HEK293 (cell line): ENCODE measurements at regions of chr2 and their contacts with region 1.

Region 1: DNA sequence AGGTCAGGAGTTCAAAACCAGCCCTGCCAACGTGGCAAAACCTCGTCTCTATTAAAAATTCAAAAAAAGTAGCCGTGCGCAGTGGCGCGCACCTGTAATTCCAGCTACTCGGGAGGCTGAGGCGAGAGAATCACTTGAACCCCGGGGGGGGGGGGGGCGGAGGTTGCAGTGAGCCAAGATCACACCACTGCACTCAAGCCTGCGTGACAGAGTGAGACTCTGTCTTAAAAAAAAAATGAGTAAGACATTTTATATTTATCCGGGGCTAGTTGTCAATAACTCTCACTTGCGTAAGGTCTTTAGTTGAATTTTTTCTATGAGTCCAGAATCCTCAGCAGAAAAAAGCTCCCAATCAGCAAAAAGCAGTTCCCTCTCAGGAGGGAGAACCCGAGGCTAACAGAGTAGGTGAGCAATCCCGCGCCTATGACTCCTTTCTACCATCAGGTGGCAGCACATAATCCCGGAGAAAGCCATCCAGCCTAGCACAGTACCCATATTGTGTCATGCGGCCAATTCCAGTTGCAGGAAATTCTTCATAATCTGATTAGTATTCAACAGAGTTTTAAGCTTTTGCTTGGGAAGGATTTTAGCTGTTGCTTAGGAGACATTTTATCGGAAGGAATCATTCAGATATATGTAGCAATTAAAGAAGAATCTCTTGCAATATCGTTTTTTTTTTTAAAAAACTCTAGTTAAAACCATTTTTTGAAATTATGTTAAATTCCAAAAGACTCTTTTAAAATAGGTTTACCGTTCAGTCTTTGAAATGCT is 11.9 kb upstream of the CRYGA start:
- H3K4me3 ChIP-seq: no peak overlapping the region
- H3K27ac ChIP-seq: no peak overlapping the region
- H3K4me1 ChIP-seq: no peaks in the 10 kb centered on the region
- CTCF ChIP-seq: peak; percentile 63; the same call in 1 of the 2 replicates

Region 2: DNA sequence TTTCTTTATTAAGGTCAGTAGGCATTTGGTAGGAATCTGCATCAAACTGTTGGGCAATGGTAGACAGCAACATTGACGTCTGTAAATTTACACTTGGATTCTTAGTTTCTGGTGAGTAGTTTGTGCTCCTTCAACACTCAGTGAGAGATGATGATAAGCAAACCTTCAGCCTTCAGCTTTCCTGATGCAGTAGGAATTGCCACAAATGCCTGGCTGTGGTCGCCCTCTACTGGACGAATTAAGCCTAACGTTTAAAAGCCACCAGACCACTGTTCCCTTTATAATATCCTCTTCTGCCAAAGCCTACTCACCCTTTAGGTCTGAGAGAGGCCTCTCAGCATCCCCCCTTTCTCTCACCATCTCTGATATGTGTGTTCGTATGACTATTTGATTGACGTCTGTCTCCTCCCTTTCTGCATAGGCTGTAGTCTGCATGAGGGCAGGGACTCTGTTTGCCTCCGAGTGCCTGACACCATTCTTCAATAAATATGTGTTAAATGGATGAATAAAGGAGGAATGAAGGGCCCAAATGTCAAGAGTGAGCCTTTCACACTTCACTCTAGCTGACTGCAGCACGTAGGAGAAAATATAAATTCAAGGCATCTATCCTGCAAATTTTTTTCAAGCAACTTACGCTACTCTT is 102.9 kb before region 1 on chr2:
- CTCF ChIA-PET with region 1: no interaction called
- POLR2A ChIA-PET with region 1: no interaction called
- H3K4me3 ChIP-seq: no peak overlapping the region
- H3K27ac ChIP-seq: no peak overlapping the region
- H3K4me1 ChIP-seq: no peaks in the 10 kb centered on the region
- CTCF ChIP-seq: peak; percentile 76

Region 3: GRCh38 chr2:208086029-208086428 is 89.2 kb before region 1 on chr2:
- CTCF ChIA-PET with region 1: no interaction called
- POLR2A ChIA-PET with region 1: no interaction called
- H3K4me3 ChIP-seq: no peak overlapping the region
- H3K27ac ChIP-seq: no peak overlapping the region
- H3K4me1 ChIP-seq: no peaks in the 10 kb centered on the region
- CTCF ChIP-seq: no peak

Region 4: DNA sequence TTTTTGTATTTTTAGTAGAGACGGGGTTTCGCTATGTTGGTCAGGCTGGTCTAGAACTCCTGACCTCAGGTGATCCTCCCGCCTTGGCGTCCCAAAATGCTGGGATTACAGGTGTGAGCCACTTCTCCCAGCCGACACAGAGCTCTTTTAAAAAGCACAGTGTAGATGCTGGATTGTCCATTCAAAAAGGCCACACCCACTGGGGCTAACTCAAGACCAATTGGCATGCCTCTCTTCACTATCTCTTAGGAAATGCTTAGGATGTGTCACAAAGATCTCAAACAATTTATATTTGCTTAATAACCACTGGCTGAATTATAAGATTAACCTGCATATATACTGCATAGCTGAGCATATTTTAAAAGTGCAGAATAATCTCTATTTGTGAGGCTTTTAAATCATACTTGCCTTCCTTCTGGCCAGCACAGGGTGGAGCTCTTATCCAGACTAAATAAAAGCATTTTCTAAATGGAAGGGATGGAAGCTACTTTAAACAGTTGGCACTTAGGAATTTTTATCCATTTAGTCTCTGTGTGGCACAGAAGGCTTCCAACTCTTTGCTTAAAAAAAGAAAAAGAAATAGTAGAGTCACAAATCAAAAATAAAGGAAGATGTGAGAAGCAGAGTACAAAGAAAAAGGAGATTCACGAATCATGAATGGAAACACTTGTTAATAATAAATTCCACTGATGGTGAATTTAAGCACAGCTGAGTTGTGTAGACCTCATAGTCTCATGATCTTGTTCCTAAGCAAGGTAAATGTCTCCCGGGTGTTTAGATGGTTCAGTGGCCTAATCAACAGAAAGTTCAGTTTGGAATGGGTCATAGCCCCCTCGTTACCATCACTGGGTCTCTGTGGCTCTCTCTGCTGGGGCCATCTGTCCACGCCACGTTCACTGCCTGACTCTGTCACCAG is 73.3 kb before region 1 on chr2:
- CTCF ChIA-PET with region 1: interaction called, 22 read pairs
- POLR2A ChIA-PET with region 1: no interaction called
- H3K4me3 ChIP-seq: no peak overlapping the region
- H3K27ac ChIP-seq: no peak overlapping the region
- H3K4me1 ChIP-seq: no peaks in the 10 kb centered on the region
- CTCF ChIP-seq: no peak

Region 5: DNA sequence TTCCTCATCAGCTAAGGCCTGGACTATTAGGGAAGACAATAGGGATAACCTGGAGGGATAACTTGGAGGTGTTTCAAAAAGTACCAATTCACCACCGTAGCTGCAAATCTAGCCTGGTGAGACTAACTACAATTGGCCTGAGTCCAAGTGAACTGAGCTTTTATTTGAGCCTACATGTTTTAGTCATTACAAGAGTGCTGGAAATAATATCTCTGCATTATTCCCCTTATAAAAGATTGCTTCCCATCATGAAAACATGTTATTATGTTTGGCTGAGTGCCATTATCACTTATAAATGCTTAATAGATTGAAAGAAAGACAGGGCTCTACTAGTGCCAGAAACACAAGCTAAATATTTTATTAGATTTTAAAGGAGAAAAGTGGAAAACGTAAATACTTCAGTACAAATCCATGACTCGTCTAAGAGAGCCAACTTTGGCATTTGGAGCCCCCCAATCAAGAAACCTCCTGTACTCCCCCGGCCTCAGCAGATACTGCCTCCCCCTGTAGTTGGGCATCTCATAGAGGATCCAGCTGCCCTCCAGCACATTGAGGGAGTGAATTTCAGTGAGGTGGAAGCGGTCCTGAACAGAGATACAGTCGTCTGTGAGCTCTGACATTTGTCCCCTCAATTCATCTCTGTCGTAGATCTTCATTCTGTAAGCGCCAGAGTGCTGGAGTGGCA is 32.9 kb before region 1 on chr2:
- CTCF ChIA-PET with region 1: interaction called, 17 read pairs
- POLR2A ChIA-PET with region 1: interaction called, 4 read pairs
- H3K4me3 ChIP-seq: no peak overlapping the region
- H3K27ac ChIP-seq: peak overlapping the region; percentile 32
- H3K4me1 ChIP-seq: peaks cover 13% of the 10 kb centered on the region
- CTCF ChIP-seq: no peak

Region 6: GRCh38 chr2:208164951-208165755 is 10.1 kb before region 1 on chr2:
- CTCF ChIA-PET with region 1: interaction called, 15 read pairs
- POLR2A ChIA-PET with region 1: no interaction called
- H3K4me3 ChIP-seq: no peak overlapping the region
- H3K27ac ChIP-seq: no peak overlapping the region
- H3K4me1 ChIP-seq: no peaks in the 10 kb centered on the region
- CTCF ChIP-seq: no peak

Region 7: DNA sequence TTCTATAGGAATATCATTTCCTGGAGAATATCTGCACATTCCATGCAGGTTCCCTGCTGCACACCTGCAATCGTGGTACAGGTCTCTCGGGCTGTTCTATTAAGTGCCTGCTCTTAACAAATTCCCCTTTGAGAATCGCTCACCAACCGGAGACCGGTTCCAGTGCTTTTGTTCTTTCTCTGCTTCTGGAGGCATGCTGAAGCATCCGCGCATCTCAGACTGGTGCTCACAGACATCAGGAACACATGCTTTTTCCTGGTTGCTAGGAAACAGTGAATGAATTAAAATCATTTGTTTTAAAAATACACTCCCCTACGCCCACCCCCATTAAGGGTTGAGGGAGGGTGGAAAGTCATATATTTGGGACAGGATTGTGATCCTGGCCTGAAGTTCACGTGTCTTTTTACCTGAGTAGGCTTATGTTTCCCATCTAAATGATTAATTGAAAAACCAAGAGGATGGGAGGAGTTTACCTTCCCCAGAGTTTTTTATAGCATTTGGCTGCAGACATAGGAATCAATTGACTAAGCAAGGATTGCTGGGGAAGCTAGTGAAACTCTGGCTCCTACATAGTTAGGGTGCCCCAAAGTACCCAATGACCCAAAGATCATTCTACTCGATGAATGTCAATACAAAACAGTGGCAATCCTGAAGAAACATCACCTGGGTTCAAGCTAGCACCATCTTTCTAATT is 14.7 kb after region 1 on chr2 and contains the start of gene C2orf80:
- CTCF ChIA-PET with region 1: interaction called, 12 read pairs
- POLR2A ChIA-PET with region 1: interaction called, 7 read pairs
- H3K4me3 ChIP-seq: no peak within 1 kb of the TSS
- H3K27ac ChIP-seq: no peak within 1 kb of the TSS
- H3K4me1 ChIP-seq: no peaks in the 10 kb centered on the region; the same call in 1 of the 2 replicates
- CTCF ChIP-seq: no peak

Region 8: GRCh38 chr2:208240619-208241209 is 65.5 kb after region 1 on chr2:
- CTCF ChIA-PET with region 1: interaction called, 14 read pairs
- POLR2A ChIA-PET with region 1: no interaction called
- H3K4me3 ChIP-seq: no peak overlapping the region
- H3K27ac ChIP-seq: no peak overlapping the region
- H3K4me1 ChIP-seq: no peaks in the 10 kb centered on the region
- CTCF ChIP-seq: no peak

Region 9: DNA sequence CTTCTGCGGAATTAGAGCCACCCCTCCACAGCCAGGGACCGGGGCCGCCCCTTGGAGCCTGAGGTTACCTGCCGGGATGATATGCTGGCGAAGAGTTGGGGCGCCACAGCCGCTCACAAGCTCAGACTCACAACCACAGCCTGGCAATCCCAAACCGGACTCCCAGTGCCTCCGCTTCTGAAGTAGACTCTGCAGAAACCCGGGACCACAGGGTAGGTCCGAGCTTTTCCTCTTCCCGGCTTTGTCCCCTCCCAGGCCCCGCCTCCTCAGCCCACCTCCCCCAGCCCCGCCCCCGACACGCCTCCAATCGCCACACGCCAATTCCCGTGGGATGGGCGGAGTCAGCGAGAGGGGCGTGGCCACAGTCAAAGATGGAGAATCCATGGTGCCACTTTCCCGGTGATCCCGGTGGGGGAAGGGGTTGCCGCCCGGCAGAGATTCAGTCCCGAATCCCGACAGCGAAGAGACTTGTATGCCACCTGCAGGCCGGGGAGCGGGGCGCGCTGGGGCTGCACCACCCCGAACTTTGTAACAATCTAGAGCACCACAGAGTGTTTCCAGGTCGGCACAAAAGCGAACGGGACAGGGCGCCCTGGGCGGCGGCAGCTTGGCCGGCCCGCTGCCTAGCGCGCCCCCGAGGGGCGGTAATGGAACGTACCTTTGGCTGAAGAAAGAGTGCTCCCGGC is 79.8 kb after region 1 on chr2 and contains the start of gene IDH1:
- CTCF ChIA-PET with region 1: interaction called, 53 read pairs
- POLR2A ChIA-PET with region 1: interaction called, 16 read pairs
- H3K4me3 ChIP-seq: peak within 1 kb of the TSS; percentile 82
- H3K27ac ChIP-seq: peak within 1 kb of the TSS; percentile 83
- H3K4me1 ChIP-seq: 0 out of 2 replicates have a peak, but pooled peaks cover 2% of the 10 kb centered on the region
- CTCF ChIP-seq: peak; percentile 91